ENCODE measurements at regions of chr10 and their contacts with region 1.

Region 1: DNA sequence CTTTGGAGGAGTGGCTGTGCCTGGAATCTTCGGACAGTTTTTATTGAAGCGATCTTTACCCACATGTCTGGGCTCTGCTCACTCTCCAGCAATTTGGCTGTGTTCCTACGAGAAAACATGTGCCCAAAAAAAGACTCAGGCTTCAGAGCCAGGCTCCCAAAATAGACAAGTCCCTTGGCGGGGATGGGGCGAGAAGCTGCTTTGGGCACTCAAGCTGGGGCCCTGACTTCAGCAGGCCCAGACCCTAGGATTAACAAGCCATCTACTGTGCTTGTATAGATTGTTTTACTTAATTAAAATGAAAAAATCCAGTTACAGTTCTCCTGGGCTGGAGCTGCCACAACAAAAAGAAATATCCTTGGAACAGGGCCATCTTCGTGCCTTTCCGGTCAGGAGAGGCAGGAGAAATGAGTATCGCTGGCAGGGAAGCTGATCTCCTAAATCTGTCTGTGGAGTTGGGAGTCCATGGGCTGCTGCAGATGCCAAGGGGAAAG is 51.4 kb upstream of the PDCD4 start:
- DNase-seq: no peak
- H3K4me3 Mint-ChIP-seq: no peak overlapping the region
- H3K27ac Mint-ChIP-seq: no peak overlapping the region
- H3K4me1 Mint-ChIP-seq: peaks cover 4% of the 10 kb centered on the region
- H3K27me3 Mint-ChIP-seq: peaks cover under 1% of the 10 kb centered on the region

Region 2: GRCh38 chr10:110497438-110498086 is 322.8 kb before region 1 on chr10 and contains the start of gene DUSP5:
- CTCF ChIA-PET with region 1: no interaction called
- POLR2A ChIA-PET with region 1: no interaction called
- DNase-seq: peak; percentile 94
- H3K4me3 Mint-ChIP-seq: peak within 1 kb of the TSS; percentile 89
- H3K27ac Mint-ChIP-seq: peak within 1 kb of the TSS; percentile 89
- H3K4me1 Mint-ChIP-seq: peaks cover 57% of the 10 kb centered on the region
- H3K27me3 Mint-ChIP-seq: no peaks in the 10 kb centered on the region
- total RNA-seq, gene DUSP5: 24.8 to 25.9 TPM

Region 3: DNA sequence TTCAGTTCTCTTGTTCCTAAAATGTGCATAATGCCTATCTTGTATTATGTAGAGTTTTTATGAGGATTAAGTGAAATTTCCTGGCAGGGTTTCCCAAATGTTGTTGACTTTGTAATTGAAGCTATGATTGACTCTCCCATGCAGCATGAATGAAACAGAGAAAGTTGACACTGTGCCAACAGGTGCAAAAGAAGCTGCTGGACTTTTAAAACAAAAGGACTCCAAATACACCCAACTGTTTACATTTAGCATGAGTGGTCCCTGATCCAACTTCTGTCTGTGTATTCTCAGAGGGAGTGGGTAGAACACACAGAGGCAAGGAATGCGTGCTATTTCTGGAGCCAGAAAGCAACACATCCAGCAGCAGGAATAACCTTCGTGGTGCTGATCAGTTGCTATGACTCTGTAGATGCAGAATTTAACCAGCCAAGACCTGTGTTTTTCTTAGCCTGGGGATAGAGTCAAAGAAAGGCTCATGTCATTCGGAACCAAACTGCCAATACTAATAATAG is 190.6 kb before region 1 on chr10:
- CTCF ChIA-PET with region 1: no interaction called
- POLR2A ChIA-PET with region 1: no interaction called
- DNase-seq: no peak
- H3K4me3 Mint-ChIP-seq: no peak overlapping the region
- H3K27ac Mint-ChIP-seq: no peak overlapping the region
- H3K4me1 Mint-ChIP-seq: no peaks in the 10 kb centered on the region
- H3K27me3 Mint-ChIP-seq: peaks cover 2% of the 10 kb centered on the region

Region 4: DNA sequence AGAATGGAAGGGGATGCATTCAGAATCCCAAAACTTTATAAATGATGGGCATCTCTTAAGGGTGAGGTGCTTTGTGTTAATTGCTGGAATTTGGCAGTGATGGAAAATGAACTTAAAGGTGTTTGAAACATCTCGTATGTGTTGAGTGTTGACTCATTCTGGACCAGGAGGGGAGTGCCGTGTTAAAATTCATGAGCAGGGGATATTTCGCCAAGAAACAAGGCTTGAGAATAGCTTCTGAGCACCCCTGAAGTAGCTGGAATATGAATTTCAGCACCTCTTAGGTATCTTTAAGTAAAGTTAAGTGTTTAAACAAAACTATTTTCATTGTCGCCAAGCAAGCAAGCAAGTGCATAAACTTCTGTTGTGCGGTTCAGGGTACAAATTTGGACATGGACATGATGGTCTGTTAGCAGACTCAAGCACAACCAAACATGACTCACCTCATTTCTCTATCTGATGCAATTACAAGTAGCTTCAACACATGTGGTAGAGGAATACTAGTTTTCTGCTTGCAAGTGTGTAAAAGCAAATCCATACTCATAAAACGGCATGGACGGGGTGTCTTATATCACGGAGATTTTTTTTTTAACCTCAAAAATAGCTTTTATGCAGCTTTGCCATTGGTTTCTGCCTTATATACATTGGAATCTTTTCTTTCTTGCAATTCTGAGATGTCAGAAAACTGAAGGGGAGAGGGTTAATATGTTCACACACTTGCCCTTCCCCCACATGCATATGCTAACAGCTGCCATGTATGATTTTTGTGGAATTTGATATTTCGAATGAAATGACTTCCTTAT is 55.0 kb before region 1 on chr10:
- CTCF ChIA-PET with region 1: no interaction called
- POLR2A ChIA-PET with region 1: no interaction called
- DNase-seq: no peak
- H3K4me3 Mint-ChIP-seq: no peak overlapping the region
- H3K27ac Mint-ChIP-seq: no peak overlapping the region
- H3K4me1 Mint-ChIP-seq: peaks cover 5% of the 10 kb centered on the region
- H3K27me3 Mint-ChIP-seq: no peaks in the 10 kb centered on the region

Region 5: DNA sequence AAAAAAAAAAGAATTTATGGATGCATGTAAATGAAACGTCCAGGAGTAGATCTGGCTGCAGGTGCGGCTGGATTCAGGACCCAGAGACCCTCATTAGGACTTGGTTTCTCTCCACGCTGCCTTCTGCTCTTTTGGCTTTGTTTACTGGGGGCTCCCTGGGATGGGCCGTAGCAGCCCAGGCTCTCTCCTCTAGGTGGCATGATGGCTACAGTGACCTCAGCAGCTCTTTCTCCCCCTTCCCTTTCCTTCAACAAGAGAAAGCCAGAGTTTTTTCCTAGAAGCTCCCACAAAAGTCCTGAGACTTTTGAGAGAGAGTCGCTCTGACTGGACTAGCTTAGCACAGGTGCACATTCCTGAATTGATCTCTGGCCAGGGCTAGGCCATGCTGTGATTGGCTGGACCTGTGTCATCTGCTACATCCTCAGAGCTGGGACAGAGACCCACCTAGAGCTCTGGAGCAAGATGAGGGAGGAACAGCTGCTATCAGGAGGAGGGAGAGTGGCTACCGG is 16.5 kb before region 1 on chr10:
- CTCF ChIA-PET with region 1: interaction called, 17 read pairs
- POLR2A ChIA-PET with region 1: no interaction called
- DNase-seq: peak; percentile 21
- H3K4me3 Mint-ChIP-seq: no peak overlapping the region
- H3K27ac Mint-ChIP-seq: peak overlapping the region; percentile 83
- H3K4me1 Mint-ChIP-seq: peaks cover 37% of the 10 kb centered on the region
- H3K27me3 Mint-ChIP-seq: no peaks in the 10 kb centered on the region